Left cardiac atrium (tissue), 4 donors: ENCODE measurements at regions of chr18 and their contacts with region 1.

Region 1: GRCh38 chr18:31555971-31556747 is 35.5 kb upstream of the TTR start:
- DNase-seq: no peak
- ATAC-seq: peak; percentile 72 to 73

Region 2: GRCh38 chr18:31626409-31626808 is 70.2 kb after region 1 on chr18:
- intact Hi-C with region 1: loop called in 1 of 2 experiments (anchors 5 kb)
- DNase-seq: no peak
- ATAC-seq: no peak

Region 3: DNA sequence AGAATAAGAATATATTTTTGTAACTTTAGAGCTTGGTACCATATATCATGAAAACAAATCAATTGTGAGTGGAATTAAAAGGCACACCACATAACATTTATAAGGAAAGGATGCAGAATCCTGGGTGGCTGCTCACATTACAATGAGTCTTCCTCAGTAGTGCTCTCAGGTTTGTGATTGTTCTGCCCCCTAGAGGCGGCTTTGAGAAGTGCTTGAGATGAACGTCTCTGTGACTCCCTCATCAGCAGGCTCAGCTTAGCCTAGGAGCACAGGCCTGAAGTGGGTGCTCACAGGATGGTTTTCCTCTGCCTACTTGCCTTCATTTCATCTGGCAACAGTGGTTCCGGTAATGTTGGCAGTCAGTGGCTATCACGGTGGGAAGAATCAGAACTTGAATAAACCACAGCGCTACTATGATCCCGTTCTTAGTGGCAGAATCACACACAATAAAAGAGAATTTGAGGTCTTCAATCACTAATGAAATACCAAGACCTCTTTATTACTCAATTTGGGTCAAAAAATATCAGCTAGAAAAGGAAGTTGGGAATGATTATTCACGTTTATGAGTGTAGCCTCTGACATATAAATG is 166.3 kb after region 1 on chr18:
- intact Hi-C with region 1: loop called (anchors 2 to 10 kb)
- DNase-seq: peak; percentile 79
- ATAC-seq: peak; percentile 79 to 89

Region 4: GRCh38 chr18:31819106-31819924 is 263.2 kb after region 1 on chr18:
- intact Hi-C with region 1: loop called (anchors 5 kb)
- DNase-seq: no peak
- ATAC-seq: peak; percentile 59 to 70